Panc1 (cell line): ENCODE measurements at regions of chr1 and their contacts with region 1.

Region 1: DNA sequence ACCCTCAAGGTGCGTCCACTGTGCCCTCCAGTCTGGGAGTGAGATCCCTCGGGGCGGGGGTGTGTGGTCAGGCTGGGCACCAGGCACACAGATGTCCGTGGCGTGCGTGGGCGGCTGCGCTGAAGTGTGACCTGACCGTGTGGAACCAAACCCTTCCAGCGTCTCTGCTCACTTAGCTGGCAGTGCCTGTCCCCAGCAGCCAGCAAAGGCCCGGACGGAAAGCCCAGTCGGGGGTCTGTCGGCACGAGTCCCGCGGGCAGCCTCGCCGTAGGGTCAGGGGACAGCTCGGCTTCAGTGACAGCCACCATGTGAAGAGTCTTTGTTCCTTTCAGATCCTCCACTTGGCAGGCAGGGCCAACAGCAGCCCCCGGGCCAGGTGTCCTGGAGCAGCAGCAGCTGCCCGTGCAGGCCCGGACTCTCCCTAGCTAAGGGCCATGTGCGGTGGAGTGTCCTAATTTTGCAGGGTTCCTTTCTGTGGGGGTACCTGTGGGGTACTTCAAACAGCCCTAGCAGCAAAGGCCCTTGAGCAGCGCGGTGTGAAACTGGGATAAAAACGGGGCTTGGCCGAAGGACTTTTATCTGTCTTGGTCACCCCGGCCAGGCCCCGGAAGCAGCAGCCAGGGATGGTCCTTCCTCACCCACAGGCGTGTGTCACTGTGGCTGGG is 11.6 kb downstream of the TTLL10 start:
- DNase-seq: no peak
- ATAC-seq: peak; percentile 31; the same call in 1 of the 2 replicates
- H3K4me3 ChIP-seq: no peak overlapping the region
- H3K27ac ChIP-seq: no peak overlapping the region
- H3K4me1 ChIP-seq: no peaks in the 10 kb centered on the region
- H3K27me3 ChIP-seq: no peaks in the 10 kb centered on the region
- CTCF ChIP-seq: no peak

Region 2: DNA sequence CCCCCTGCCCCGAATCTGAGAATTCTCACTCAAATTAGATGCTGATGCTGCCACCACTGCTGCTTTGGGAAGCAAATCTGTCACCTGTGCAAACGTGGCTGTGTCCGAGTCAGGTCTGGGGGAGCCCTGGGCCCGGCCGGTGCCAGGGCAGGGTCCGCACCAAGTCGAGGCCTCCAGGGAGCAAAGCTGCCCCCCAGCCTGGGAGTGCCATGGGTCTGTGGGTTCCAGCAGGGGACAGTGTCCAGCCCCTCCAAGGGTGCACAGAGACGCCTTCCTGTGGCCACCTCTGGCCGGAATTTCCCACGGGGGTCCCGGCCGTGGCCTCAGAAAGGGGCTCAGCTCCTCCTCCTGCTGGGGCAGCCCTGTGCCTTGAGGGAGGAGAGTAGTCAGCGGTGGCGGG is 39.2 kb before region 1 on chr1:
- CTCF ChIA-PET with region 1: interaction called, 4 read pairs
- POLR2A ChIA-PET with region 1: interaction called, 10 read pairs
- in situ Hi-C with region 1: no loop called
- intact Hi-C with region 1: no loop called
- DNase-seq: no peak
- ATAC-seq: no peak
- H3K4me3 ChIP-seq: no peak overlapping the region
- H3K27ac ChIP-seq: no peak overlapping the region
- H3K4me1 ChIP-seq: no peaks in the 10 kb centered on the region; the same call in 1 of the 2 replicates
- H3K27me3 ChIP-seq: no peaks in the 10 kb centered on the region
- CTCF ChIP-seq: no peak

Region 3: DNA sequence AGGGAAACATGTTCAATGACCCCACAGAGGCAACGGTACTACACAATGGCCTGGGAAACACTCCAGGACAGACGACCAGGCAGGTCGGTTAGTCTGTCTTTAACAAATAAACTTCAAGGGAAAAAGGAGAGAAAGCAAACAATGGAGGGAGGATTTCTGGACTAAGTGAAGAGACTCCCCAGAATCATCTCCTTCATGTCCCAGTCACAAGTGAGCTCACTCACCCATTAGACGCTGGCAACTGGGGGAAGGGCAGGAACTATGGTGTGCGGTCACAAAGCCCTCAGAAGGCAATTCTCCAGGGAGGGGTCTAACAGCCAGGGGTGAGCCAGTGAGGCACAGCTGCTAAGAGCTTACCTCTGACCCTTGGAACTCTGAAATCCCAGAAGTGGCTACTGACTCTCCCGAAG is 648.7 kb after region 1 on chr1:
- CTCF ChIA-PET with region 1: no interaction called
- POLR2A ChIA-PET with region 1: no interaction called
- in situ Hi-C with region 1: no loop called
- intact Hi-C with region 1: no loop called
- DNase-seq: no peak
- ATAC-seq: no peak
- H3K4me3 ChIP-seq: no peak overlapping the region
- H3K27ac ChIP-seq: no peak overlapping the region
- H3K4me1 ChIP-seq: no peaks in the 10 kb centered on the region; the same call in 1 of the 2 replicates
- H3K27me3 ChIP-seq: no peaks in the 10 kb centered on the region
- CTCF ChIP-seq: no peak